Ascending aorta (tissue), 2 donors: ENCODE measurements at regions of chrX and their contacts with region 1.

Region 1: GRCh38 chrX:150365051-150365989 is 2.2 kb downstream of the MAMLD1 start:
- DNase-seq: peak in 1 of 2 donors; percentile 80
- H3K4me3 ChIP-seq: peak overlapping the region; percentile 63 to 68
- H3K27ac ChIP-seq: peak overlapping the region; percentile 82 to 89
- H3K4me1 ChIP-seq: no peaks in the 10 kb centered on the region
- H3K27me3 ChIP-seq: no peaks in the 10 kb centered on the region
- CTCF ChIP-seq: peak; percentile 57 to 66 (median 62)

Region 2: DNA sequence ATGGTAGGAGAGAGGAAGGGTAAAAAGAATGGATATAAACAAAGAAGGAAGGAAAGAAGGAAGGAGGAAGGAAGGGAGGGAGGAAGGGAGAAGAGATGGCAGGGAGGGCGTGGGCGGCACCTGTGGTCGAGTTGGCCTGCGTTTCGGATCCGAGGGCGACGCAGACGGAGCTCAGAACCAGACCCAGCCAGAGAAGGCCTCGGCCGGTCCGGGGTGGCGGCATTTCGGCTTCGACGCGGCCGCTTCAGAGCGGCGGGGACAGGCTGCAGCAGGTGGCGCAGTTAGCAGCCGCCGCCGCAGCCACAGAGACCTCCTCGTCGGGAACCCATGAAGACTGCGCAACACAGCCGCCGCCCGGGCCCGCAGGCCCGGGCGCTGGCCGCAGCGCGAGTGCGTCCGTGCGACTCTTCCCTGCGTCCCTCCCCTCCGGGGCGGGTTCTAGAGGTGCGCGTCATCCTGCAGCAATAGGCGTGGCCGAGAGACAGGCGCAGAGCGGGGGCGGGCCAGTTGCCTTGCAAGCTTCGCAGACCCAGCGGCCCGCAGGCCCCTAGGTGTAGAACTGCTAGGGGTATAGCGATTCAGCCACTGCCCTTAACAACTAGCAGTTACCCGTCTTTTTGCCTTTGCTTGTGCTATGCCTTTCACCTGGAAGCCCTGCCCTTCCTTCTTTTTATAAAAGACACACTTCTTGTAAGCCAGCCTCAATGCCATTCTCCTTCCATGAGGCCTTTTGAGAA is 860.2 kb before region 1 on chrX and contains the start of gene IDS:
- intact Hi-C with region 1: loop called (anchors 10 kb)
- DNase-seq: peak; percentile 61 to 92
- H3K4me3 ChIP-seq: peak within 1 kb of the TSS; percentile 61 to 63
- H3K27ac ChIP-seq: peak within 1 kb of the TSS; percentile 73 to 89
- H3K4me1 ChIP-seq: no peaks in the 10 kb centered on the region
- H3K27me3 ChIP-seq: no peaks in the 10 kb centered on the region
- CTCF ChIP-seq: no peak
- total RNA-seq, gene IDS: 82.7 TPM

Region 3: DNA sequence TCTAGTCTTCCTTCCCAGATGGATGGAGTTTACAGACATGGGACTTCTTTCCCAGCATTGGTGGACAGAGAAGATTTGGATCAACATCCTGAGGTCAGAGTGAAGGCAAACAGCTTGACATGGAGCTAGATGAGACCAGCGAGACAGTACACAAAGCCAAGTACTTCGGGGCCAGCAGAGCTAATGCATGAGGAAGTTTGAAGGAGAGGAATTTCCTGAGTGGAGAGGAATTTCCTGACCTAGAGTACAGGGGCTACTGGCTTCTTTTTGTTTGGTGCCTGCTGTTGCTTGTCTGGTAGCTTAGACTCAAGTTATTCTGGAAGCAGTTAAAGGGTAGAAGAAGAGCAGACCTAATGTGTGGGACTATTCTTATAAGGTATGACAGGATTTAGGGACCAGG is 358.0 kb before region 1 on chrX:
- intact Hi-C with region 1: no loop called
- DNase-seq: no peak
- H3K4me3 ChIP-seq: no peak overlapping the region
- H3K27ac ChIP-seq: no peak overlapping the region
- H3K4me1 ChIP-seq: no peaks in the 10 kb centered on the region
- H3K27me3 ChIP-seq: no peaks in the 10 kb centered on the region
- CTCF ChIP-seq: no peak

Region 4: GRCh38 chrX:150084496-150085229 is 280.7 kb before region 1 on chrX:
- intact Hi-C with region 1: loop called (anchors 10 kb)
- DNase-seq: no peak
- H3K4me3 ChIP-seq: no peak overlapping the region
- H3K27ac ChIP-seq: peak overlapping the region; percentile 63 to 81
- H3K4me1 ChIP-seq: peaks cover 4 to 30% of the 10 kb centered on the region in 2 donors
- H3K27me3 ChIP-seq: no peaks in the 10 kb centered on the region
- CTCF ChIP-seq: no peak

Region 5: GRCh38 chrX:150508451-150509367 is 143.4 kb after region 1 on chrX:
- intact Hi-C with region 1: loop called (anchors 5 kb)
- DNase-seq: peak in 1 of 2 donors; percentile 77
- H3K4me3 ChIP-seq: peak overlapping the region; percentile 12 to 52
- H3K27ac ChIP-seq: peak overlapping the region; percentile 66 to 84
- H3K4me1 ChIP-seq: peaks cover 0 to 12% of the 10 kb centered on the region in 2 donors
- H3K27me3 ChIP-seq: no peaks in the 10 kb centered on the region
- CTCF ChIP-seq: no peak

Region 6: DNA sequence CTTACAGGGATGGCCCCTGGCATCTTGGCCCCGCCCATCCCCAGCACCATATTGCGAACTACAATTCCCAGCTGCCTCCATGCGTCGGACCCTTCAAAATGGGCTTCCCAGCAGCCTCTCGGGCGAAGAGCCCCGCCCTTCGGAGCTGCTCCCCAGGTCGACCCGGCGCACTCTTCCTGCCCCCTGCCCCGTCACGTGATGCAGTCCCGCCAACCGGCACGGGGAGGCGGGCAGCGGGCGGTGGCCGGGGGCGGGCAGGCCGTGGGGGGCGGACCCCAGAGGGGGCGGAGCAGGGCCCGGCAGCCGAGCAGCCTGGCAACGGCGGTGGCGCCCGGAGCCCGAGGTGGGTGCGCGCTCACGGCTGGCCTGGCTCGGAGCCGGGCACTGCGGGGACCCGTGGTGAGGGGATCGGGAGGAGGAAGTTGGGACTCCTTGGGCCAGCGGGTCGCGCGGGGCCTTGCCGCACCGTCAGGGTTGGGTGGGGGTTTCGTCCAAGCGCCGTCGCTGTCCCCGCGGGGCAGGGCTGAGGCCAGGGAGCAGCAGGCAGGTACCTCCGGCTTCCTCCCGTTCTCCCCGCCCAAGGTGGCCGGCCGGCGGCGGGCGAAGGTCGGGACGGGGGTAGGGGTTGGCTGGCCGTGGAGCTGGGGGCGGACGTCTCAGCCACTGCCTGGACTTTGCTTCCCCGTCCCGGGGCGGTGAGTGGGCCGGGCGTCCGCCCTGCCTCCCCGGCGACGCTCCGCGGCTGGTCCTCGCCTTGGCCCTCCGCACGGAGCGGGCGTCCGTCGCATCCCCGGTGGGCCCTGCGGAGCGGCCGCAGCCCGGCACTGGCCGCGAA is 203.2 kb after region 1 on chrX and contains the start of gene MTM1:
- intact Hi-C with region 1: loop called (anchors 1 kb)
- DNase-seq: peak; percentile 82 to 96
- H3K4me3 ChIP-seq: peak within 1 kb of the TSS; percentile 55 to 74
- H3K27ac ChIP-seq: peak within 1 kb of the TSS; percentile 76 to 84
- H3K4me1 ChIP-seq: no peaks in the 10 kb centered on the region
- H3K27me3 ChIP-seq: no peaks in the 10 kb centered on the region
- CTCF ChIP-seq: no peak
- total RNA-seq, gene MTM1: 7.3 TPM

Region 7: DNA sequence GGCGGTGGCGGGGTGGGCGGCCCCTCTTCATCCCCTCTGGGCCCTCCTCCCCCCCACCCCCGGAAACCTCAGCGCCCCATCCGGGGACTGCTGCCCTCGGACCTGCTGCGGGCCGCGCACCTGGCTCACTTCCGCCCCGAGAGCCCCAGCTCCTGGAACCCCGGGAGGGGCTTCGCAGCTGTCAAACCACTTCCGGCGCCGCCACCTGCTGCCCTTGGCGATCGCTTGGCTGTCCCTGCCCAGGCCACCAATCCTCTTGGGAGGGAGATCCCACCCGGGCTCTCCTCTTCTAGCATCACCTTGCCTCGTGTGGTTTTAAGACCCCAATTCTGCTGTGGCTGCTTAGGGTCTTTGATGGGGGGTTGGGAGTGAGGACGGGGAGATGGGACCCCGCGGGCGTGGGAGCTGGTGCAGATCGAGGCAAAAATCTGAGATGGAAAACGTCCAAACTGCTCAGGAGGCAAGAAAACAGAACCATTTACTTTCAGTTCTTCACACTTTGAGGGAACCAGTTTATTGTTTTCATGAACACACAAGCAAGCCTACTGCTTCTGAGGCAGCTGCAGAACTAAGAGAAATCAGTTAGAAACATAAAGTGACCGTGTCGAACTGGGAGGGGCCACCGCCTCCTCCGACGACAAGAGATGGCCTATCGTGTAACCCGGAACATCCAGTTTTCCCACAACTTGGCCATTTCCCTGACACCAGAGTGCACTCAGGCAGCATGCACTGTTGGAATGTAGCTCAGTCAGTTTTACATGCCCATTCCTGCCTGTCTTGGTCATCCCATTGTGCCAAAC is 328.7 kb after region 1 on chrX:
- intact Hi-C with region 1: loop called (anchors 10 kb)
- DNase-seq: peak in 1 of 2 donors; percentile 77
- H3K4me3 ChIP-seq: peak overlapping the region; percentile 66 to 72
- H3K27ac ChIP-seq: peak overlapping the region; percentile 91 to 93
- H3K4me1 ChIP-seq: no peaks in the 10 kb centered on the region
- H3K27me3 ChIP-seq: no peaks in the 10 kb centered on the region
- CTCF ChIP-seq: no peak